ENCODE measurements at regions of chr2 and their contacts with region 1.

Region 1: GRCh38 chr2:98649135-98649991 is 41.0 kb downstream of the UNC50 start:
- DNase-seq: peak; percentile 86
- H3K4me3 Mint-ChIP-seq: no peak overlapping the region
- H3K27ac Mint-ChIP-seq: peak overlapping the region; percentile 36
- H3K4me1 Mint-ChIP-seq: peaks cover 50% of the 10 kb centered on the region
- H3K27me3 Mint-ChIP-seq: no peaks in the 10 kb centered on the region

Region 2: GRCh38 chr2:98822301-98823164 is 173.2 kb after region 1 on chr2:
- CTCF ChIA-PET with region 1: interaction called, 13 read pairs
- POLR2A ChIA-PET with region 1: interaction called, 5 read pairs
- DNase-seq: peak; percentile 68
- H3K4me3 Mint-ChIP-seq: peak overlapping the region; percentile 52
- H3K27ac Mint-ChIP-seq: no peak overlapping the region
- H3K4me1 Mint-ChIP-seq: peaks cover 12% of the 10 kb centered on the region
- H3K27me3 Mint-ChIP-seq: peaks cover 19% of the 10 kb centered on the region

Region 3: DNA sequence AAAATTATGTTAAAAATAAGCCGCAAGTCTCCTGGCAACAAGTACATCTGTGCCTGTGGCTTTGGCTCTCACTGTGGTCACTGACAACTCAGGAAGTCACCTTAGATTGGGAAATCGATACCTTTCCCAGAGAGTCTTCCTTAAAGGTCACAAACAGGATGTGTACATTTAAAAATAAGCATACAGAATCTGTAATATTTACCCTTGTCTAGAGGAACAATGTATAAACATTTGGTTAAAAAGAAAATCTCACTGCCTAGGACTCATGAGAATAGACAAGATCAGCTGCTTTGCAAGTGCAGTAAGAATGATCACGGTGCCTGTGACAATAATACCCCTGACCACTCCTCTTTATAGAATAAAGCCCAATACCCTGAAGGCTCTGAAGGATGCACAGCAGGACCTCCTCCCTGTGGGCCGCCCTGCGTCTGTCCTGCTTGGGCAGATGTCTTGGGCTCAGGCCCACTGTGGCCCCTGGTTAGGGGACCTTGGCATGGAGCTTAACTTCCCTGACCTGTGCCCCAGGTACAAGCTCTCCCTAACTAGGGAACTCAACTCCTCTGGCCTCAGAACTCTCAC is 179.5 kb after region 1 on chr2:
- CTCF ChIA-PET with region 1: interaction called, 10 read pairs
- POLR2A ChIA-PET with region 1: interaction called, 3 read pairs
- DNase-seq: no peak
- H3K4me3 Mint-ChIP-seq: no peak overlapping the region
- H3K27ac Mint-ChIP-seq: peak overlapping the region; percentile 47
- H3K4me1 Mint-ChIP-seq: peaks cover 57% of the 10 kb centered on the region
- H3K27me3 Mint-ChIP-seq: peaks cover 8% of the 10 kb centered on the region

Region 4: GRCh38 chr2:98835831-98836385 is 186.5 kb after region 1 on chr2:
- CTCF ChIA-PET with region 1: interaction called, 64 read pairs
- POLR2A ChIA-PET with region 1: interaction called, 3 read pairs
- DNase-seq: peak; percentile 50
- H3K4me3 Mint-ChIP-seq: peak overlapping the region; percentile 6
- H3K27ac Mint-ChIP-seq: peak overlapping the region; percentile 53
- H3K4me1 Mint-ChIP-seq: peaks cover 49% of the 10 kb centered on the region
- H3K27me3 Mint-ChIP-seq: peaks cover 7% of the 10 kb centered on the region